Colonic mucosa (tissue), 4 donors: ENCODE measurements at regions of chr11 and their contacts with region 1.

Region 1: GRCh38 chr11:15865212-15865987 is 490.9 kb downstream of the SOX6 start:
- DNase-seq: no peak
- H3K4me3 ChIP-seq: no peak overlapping the region
- H3K27ac ChIP-seq: no peak overlapping the region
- H3K4me1 ChIP-seq: no peaks in the 10 kb centered on the region
- H3K27me3 ChIP-seq: no peaks in the 10 kb centered on the region
- CTCF ChIP-seq: no peak

Region 2: DNA sequence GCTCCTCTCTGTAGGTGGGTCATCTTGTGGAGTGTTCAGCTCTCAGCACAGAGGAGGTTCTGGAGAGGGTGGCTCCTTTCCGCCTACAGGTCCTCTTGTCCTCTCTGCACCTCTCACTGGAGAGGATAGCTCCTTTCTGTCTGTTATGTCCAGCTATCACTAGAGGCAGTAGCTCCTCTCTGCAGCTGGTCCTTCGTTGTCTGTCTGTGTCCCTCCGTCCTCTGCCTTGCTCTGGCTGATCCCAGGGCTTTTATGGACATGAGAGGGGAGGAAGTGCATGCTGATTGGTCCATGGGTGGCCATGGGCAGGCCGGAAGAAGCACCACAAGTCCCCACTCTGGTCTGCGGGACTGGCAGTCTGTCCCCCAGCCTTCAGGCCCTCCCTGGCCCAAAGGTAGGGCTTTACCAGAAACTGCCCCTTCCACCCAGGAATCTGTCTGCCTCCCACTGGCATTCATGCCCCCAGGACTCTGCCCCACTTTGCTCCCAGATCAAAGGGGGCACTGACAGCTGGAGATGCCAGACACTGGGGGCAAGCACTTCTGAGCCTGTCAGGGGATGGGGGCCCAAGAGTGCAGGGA is 830.6 kb before region 1 on chr11:
- intact Hi-C with region 1: loop called (anchors 5 kb)
- DNase-seq: no peak
- H3K4me3 ChIP-seq: no peak overlapping the region
- H3K27ac ChIP-seq: no peak overlapping the region
- H3K4me1 ChIP-seq: no peaks in the 10 kb centered on the region
- H3K27me3 ChIP-seq: peaks cover 3% of the 10 kb centered on the region
- CTCF ChIP-seq: no peak